Ascending aorta (tissue), 2 donors: ENCODE measurements at regions of chr3 and their contacts with region 1.

Region 1: GRCh38 chr3:33787328-33788009 is 11.0 kb upstream of the PDCD6IP start:
- DNase-seq: peak; percentile 25 to 80
- H3K4me3 ChIP-seq: peak overlapping the region; percentile 45 to 57
- H3K27ac ChIP-seq: no peak overlapping the region
- H3K4me1 ChIP-seq: peaks cover 0 to 5% of the 10 kb centered on the region in 2 donors
- H3K27me3 ChIP-seq: no peaks in the 10 kb centered on the region
- CTCF ChIP-seq: peak; percentile 52 to 85 (median 83)

Region 2: DNA sequence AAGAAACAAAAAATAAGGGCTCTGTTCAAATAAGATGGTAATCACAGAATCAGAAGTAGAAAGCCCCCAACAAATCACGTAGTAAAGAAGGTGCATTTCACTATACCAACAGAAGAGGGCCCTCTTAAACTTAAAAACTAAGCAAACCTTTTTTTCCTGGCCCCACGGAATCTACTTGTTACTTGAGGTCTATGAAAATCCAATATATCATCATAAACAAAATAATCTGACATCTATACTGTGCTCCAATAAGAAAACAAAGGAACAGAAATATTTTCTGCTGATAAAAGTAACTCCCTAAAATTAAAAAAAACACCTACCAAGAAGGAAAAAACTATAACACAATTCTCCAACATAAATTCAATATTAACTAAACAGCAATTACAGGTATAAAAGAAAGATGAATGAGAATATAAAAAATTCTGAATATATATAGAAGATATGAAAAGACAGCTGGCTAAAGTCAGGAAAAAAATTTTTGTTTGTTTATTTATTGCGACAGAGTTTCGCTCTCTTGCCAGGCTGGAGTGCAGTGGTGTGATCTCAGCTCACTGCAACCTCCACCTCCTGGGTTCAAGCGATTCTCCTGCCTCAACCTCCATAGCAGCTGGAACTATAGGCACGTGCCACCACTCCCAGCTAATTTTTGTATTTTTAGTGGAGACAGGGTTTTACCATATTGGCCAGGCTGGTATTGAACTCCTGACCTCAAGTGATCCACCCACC is 151.2 kb before region 1 on chr3:
- intact Hi-C with region 1: loop called (anchors 1 kb)
- DNase-seq: no peak
- H3K4me3 ChIP-seq: no peak overlapping the region
- H3K27ac ChIP-seq: no peak overlapping the region
- H3K4me1 ChIP-seq: no peaks in the 10 kb centered on the region
- H3K27me3 ChIP-seq: no peaks in the 10 kb centered on the region
- CTCF ChIP-seq: peak; percentile 39 to 65 (median 54)